Activated CD4-positive, alpha-beta T cell treated with anti-CD3 and anti-CD28 coated beads, Interleukin-2, amount 10 ng/mL, durations not matched to agents 24 days and 14 days (primary cell): ENCODE measurements at regions of chr4 and their contacts with region 1.

Region 1: DNA sequence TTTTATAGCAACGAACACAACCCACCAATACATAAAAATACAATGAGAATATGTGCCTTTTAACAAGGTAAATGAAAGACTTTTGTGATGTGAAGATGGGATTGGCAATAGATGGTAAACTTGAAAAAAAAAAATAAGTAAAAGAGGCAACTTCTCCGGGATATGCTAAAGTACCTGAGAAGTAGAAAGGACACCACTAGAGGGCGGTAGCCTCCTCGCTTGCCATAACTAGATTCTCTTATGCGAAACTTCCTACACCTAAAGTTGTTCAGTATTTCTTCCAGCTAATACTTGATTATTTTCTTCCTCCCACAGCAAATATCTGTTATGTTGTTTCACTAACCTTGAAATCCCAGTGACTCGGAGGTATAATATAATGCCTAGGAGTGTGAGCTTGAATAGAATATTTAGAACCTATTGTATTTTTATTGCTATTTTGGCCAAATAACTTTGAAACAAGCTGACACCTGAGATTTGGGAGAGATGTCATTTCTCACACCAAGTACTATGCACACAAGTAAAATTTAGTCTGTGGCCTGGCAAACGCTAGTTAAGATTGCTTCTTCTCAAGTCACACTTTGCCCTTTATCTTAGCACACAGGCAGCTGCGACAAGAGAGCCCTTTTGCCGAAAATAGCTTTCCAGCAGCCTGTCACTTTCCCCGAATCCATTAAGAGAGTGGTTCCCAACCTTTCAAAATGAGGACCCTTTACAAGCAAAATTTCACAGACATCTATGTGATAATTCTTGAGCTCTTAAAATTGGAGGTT is 44.9 kb upstream of the PDLIM5 start:
- DNase-seq: peak; percentile 85
- H3K4me3 Mint-ChIP-seq: no peak overlapping the region
- H3K27ac Mint-ChIP-seq: no peak overlapping the region
- H3K4me1 Mint-ChIP-seq: no peaks in the 10 kb centered on the region
- H3K27me3 Mint-ChIP-seq: peaks cover 15% of the 10 kb centered on the region

Region 2: DNA sequence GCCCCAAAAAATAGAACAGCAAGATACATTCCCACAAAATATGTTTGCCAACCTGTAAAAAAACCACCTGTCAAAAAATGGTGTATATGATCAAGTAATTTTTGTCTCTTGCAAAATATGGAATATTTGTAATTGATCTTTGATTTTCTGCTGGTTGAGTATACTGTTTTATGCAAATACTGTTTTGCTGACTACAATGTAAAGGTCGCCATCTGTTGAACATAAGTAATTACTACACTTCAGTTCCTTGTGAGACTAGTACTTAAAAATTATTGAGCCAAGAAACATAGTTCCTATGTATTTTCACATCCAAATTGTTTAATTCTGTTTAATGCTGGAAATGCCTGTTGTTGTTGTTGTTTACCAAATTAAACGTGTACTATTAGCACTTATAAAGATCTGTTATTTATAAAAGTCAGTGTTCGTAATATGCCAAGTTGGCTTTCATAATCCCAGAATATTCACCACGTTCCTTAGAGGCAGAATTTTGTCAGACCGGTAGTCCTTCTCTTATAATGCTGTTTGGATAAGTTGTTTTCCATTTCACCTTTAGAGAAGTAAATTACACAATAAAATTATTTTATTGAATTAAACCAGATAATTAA is 189.1 kb after region 1 on chr4:
- intact Hi-C with region 1: loop called (anchors 1 kb)
- DNase-seq: no peak
- H3K4me3 Mint-ChIP-seq: no peak overlapping the region
- H3K27ac Mint-ChIP-seq: no peak overlapping the region
- H3K4me1 Mint-ChIP-seq: no peaks in the 10 kb centered on the region
- H3K27me3 Mint-ChIP-seq: no peaks in the 10 kb centered on the region